GM12878 (cell line): ENCODE measurements at regions of chr3 and their contacts with region 1.

Region 1: GRCh38 chr3:141360888-141361598 is 7.3 kb upstream of the ZBTB38 start:
- DNase-seq: no peak
- ATAC-seq: peak; percentile 87
- H3K4me3 ChIP-seq: peak overlapping the region; percentile 51; the same call in 1 of the 2 replicates
- H3K27ac ChIP-seq: peak overlapping the region; percentile 59
- H3K4me1 ChIP-seq: peaks cover 10% of the 10 kb centered on the region
- H3K27me3 ChIP-seq: no peaks in the 10 kb centered on the region
- CTCF ChIP-seq: peak; percentile 79 to 90 (median 82)
- EP300 ChIP-seq: no peak
- POLR2A ChIP-seq: no peak
- RAD21 ChIP-seq: peak; percentile 98

Region 2: GRCh38 chr3:141303481-141304223 is 57.4 kb before region 1 on chr3:
- CTCF ChIA-PET with region 1: interaction called, 80 read pairs
- POLR2A ChIA-PET with region 1: interaction called, 6 read pairs
- RAD21 ChIA-PET with region 1: interaction called, 10 read pairs
- SMC1A ChIA-PET with region 1: interaction called, 51 read pairs
- in situ Hi-C with region 1: no loop called
- intact Hi-C with region 1: loop called (anchors 2 kb)
- DNase-seq: peak; percentile 64
- ATAC-seq: peak; percentile 93
- H3K4me3 ChIP-seq: no peak overlapping the region
- H3K27ac ChIP-seq: no peak overlapping the region
- H3K4me1 ChIP-seq: peaks cover 8% of the 10 kb centered on the region
- H3K27me3 ChIP-seq: no peaks in the 10 kb centered on the region
- CTCF ChIP-seq: peak; percentile 55 to 78 (median 70); a peak in 5 of 6 replicates
- EP300 ChIP-seq: no peak
- POLR2A ChIP-seq: no peak
- RAD21 ChIP-seq: peak; percentile 89

Region 3: GRCh38 chr3:141331377-141332318 is 29.4 kb before region 1 on chr3:
- CTCF ChIA-PET with region 1: interaction called, 32 read pairs
- POLR2A ChIA-PET with region 1: interaction called, 12 read pairs
- RAD21 ChIA-PET with region 1: interaction called, 30 read pairs
- SMC1A ChIA-PET with region 1: interaction called, 67 read pairs
- in situ Hi-C with region 1: no loop called
- intact Hi-C with region 1: no loop called
- DNase-seq: peak; percentile 69
- ATAC-seq: peak; percentile 24
- H3K4me3 ChIP-seq: no peak overlapping the region
- H3K27ac ChIP-seq: peak overlapping the region; percentile 62
- H3K4me1 ChIP-seq: peaks cover 53% of the 10 kb centered on the region
- H3K27me3 ChIP-seq: no peaks in the 10 kb centered on the region
- CTCF ChIP-seq: no peak
- EP300 ChIP-seq: peak in 1 of 2 experiments; percentile 45; a peak in 1 of 4 replicates
- POLR2A ChIP-seq: no peak
- RAD21 ChIP-seq: no peak

Region 4: GRCh38 chr3:141379250-141379966 is 18.4 kb after region 1 on chr3:
- CTCF ChIA-PET with region 1: interaction called, 17 read pairs
- POLR2A ChIA-PET with region 1: interaction called, 9 read pairs
- RAD21 ChIA-PET with region 1: interaction called, 89 read pairs
- SMC1A ChIA-PET with region 1: interaction called, 47 read pairs
- in situ Hi-C with region 1: no loop called
- intact Hi-C with region 1: no loop called
- DNase-seq: peak; percentile 95
- ATAC-seq: peak; percentile 62
- H3K4me3 ChIP-seq: peak overlapping the region; percentile 41; the same call in 1 of the 2 replicates
- H3K27ac ChIP-seq: peak overlapping the region; percentile 94
- H3K4me1 ChIP-seq: peaks cover 81% of the 10 kb centered on the region
- H3K27me3 ChIP-seq: no peaks in the 10 kb centered on the region
- CTCF ChIP-seq: no peak
- EP300 ChIP-seq: peak; percentile 93 to 98
- POLR2A ChIP-seq: peak; percentile 68
- RAD21 ChIP-seq: peak; percentile 21; the same call in 1 of the 2 replicates

Region 5: GRCh38 chr3:141412087-141412935 is 51.3 kb after region 1 on chr3:
- CTCF ChIA-PET with region 1: interaction called, 107 read pairs
- POLR2A ChIA-PET with region 1: interaction called, 6 read pairs
- RAD21 ChIA-PET with region 1: interaction called, 42 read pairs
- SMC1A ChIA-PET with region 1: interaction called, 205 read pairs
- in situ Hi-C with region 1: no loop called
- intact Hi-C with region 1: loop called (anchors 1 kb)
- DNase-seq: no peak
- ATAC-seq: peak; percentile 63
- H3K4me3 ChIP-seq: peak overlapping the region; percentile 57
- H3K27ac ChIP-seq: peak overlapping the region; percentile 92
- H3K4me1 ChIP-seq: peaks cover 63% of the 10 kb centered on the region
- H3K27me3 ChIP-seq: no peaks in the 10 kb centered on the region
- CTCF ChIP-seq: no peak
- EP300 ChIP-seq: no peak
- POLR2A ChIP-seq: 0 out of 2 replicates have a peak, but pooled peaks have one; percentile 34
- RAD21 ChIP-seq: no peak

Region 6: DNA sequence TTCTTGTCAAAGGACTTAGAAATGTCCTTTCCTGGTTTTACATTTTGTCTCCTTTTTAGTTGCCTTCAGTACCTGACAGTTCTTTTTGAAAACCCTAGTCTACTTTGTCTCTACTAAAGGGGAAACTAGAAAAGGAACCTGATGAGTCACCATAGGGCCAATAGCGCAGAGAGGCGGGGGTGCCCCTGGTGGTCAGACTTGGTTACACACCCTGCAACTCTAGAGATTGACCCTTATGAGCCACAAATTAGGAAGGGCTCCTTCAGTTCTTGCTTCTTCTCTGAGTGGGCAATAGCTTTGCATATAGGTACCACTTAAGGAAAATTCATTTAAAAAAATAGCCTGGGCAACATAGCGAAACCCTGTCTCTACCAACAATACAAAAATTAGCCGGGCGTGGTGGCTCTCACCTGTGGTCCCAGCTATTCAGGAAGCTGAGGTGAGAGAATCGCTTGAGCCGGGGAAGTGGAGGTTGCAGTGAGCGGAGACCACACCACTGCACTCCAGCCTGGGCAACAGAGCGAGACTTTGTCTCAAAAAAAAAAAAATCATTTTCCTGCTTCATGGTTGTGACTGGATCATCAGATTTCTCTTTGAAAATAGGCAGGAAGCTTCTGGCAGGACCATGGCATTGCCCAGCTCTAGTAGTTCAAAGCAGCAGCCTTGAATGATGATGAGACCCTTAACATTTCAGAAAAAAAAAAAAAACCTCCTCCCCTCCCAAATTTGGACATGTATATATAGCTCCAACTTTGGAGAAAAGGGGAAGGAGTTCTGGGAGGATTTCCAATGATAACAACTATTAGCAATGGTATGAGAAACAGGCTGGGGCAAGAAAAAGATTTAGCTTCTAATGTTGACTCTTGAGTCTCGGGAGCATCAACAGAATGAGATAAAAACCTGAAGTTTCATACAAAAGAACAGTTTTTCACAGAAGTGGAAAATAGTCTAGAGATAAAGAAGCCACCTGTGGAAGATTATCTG is 80.6 kb after region 1 on chr3:
- CTCF ChIA-PET with region 1: interaction called, 97 read pairs
- POLR2A ChIA-PET with region 1: interaction called, 11 read pairs
- RAD21 ChIA-PET with region 1: interaction called, 85 read pairs
- SMC1A ChIA-PET with region 1: interaction called, 93 read pairs
- in situ Hi-C with region 1: loop called (anchors 5 kb)
- intact Hi-C with region 1: loop called (anchors 1 kb)
- DNase-seq: peak; percentile 84
- ATAC-seq: peak; percentile 99
- H3K4me3 ChIP-seq: no peak overlapping the region
- H3K27ac ChIP-seq: peak overlapping the region; percentile 73
- H3K4me1 ChIP-seq: peaks cover 31% of the 10 kb centered on the region
- H3K27me3 ChIP-seq: no peaks in the 10 kb centered on the region
- CTCF ChIP-seq: peak; percentile 94 to 96 (median 95)
- EP300 ChIP-seq: no peak
- POLR2A ChIP-seq: no peak
- RAD21 ChIP-seq: peak; percentile 86

Region 7: GRCh38 chr3:141561426-141562034 is 200.5 kb after region 1 on chr3:
- CTCF ChIA-PET with region 1: interaction called, 24 read pairs
- POLR2A ChIA-PET with region 1: no interaction called
- RAD21 ChIA-PET with region 1: interaction called, 15 read pairs
- SMC1A ChIA-PET with region 1: interaction called, 18 read pairs
- in situ Hi-C with region 1: no loop called
- intact Hi-C with region 1: loop called (anchors 2 kb)
- DNase-seq: no peak
- ATAC-seq: peak; percentile 45; the same call in 2 of the 3 replicates
- H3K4me3 ChIP-seq: no peak overlapping the region
- H3K27ac ChIP-seq: no peak overlapping the region
- H3K4me1 ChIP-seq: no peaks in the 10 kb centered on the region
- H3K27me3 ChIP-seq: no peaks in the 10 kb centered on the region
- CTCF ChIP-seq: peak; percentile 94 to 96 (median 94); a peak in 5 of 6 replicates
- EP300 ChIP-seq: no peak
- POLR2A ChIP-seq: no peak
- RAD21 ChIP-seq: peak; percentile 100